H1 (cell line): ENCODE measurements at regions of chr13 and their contacts with region 1.

Region 1: GRCh38 chr13:110361365-110361911 is 54.4 kb downstream of the COL4A2 start:
- DNase-seq: no peak
- H3K4me3 ChIP-seq: no peak overlapping the region
- H3K27ac ChIP-seq: no peak overlapping the region
- H3K4me1 ChIP-seq: no peaks in the 10 kb centered on the region; a peak in 1 of 7 replicates
- H3K27me3 ChIP-seq: no peaks in the 10 kb centered on the region
- CTCF ChIP-seq: no peak
- EP300 ChIP-seq: no peak
- POLR2A ChIP-seq: no peak
- RAD21 ChIP-seq: no peak

Region 2: GRCh38 chr13:110371550-110372465 is 10.4 kb after region 1 on chr13:
- CTCF ChIA-PET with region 1: interaction called, 20 read pairs
- POLR2A ChIA-PET with region 1: interaction called, 3 read pairs
- DNase-seq: no peak
- H3K4me3 ChIP-seq: no peak overlapping the region
- H3K27ac ChIP-seq: no peak overlapping the region
- H3K4me1 ChIP-seq: no peaks in the 10 kb centered on the region
- H3K27me3 ChIP-seq: no peaks in the 10 kb centered on the region
- CTCF ChIP-seq: no peak
- EP300 ChIP-seq: no peak
- POLR2A ChIP-seq: no peak
- RAD21 ChIP-seq: no peak

Region 3: GRCh38 chr13:110379905-110380341 is 18.5 kb after region 1 on chr13:
- CTCF ChIA-PET with region 1: interaction called, 17 read pairs
- POLR2A ChIA-PET with region 1: no interaction called
- DNase-seq: peak in 1 of 2 experiments; percentile 59
- H3K4me3 ChIP-seq: peak overlapping the region in 1 of 4 experiments; percentile 25; a peak in 1 of 8 replicates
- H3K27ac ChIP-seq: no peak overlapping the region
- H3K4me1 ChIP-seq: peaks cover 3 to 15% (median 9%) of the 10 kb centered on the region in 4 experiments
- H3K27me3 ChIP-seq: peaks cover 0 to 3% (median under 1%) of the 10 kb centered on the region in 4 experiments; a peak in 2 of 7 replicates
- CTCF ChIP-seq: no peak
- EP300 ChIP-seq: no peak
- POLR2A ChIP-seq: no peak
- RAD21 ChIP-seq: no peak; a peak in 1 of 4 replicates

Region 4: GRCh38 chr13:110387391-110388107 is 26.1 kb after region 1 on chr13:
- CTCF ChIA-PET with region 1: interaction called, 10 read pairs
- POLR2A ChIA-PET with region 1: no interaction called
- DNase-seq: peak in 1 of 2 experiments; percentile 58
- H3K4me3 ChIP-seq: no peak overlapping the region
- H3K27ac ChIP-seq: no peak overlapping the region
- H3K4me1 ChIP-seq: peaks cover 0 to 15% (median 4%) of the 10 kb centered on the region in 4 experiments; a peak in 4 of 7 replicates
- H3K27me3 ChIP-seq: no peaks in the 10 kb centered on the region
- CTCF ChIP-seq: no peak
- EP300 ChIP-seq: no peak
- POLR2A ChIP-seq: no peak
- RAD21 ChIP-seq: no peak